ENCODE measurements at regions of chr5 and their contacts with region 1.

Region 1: DNA sequence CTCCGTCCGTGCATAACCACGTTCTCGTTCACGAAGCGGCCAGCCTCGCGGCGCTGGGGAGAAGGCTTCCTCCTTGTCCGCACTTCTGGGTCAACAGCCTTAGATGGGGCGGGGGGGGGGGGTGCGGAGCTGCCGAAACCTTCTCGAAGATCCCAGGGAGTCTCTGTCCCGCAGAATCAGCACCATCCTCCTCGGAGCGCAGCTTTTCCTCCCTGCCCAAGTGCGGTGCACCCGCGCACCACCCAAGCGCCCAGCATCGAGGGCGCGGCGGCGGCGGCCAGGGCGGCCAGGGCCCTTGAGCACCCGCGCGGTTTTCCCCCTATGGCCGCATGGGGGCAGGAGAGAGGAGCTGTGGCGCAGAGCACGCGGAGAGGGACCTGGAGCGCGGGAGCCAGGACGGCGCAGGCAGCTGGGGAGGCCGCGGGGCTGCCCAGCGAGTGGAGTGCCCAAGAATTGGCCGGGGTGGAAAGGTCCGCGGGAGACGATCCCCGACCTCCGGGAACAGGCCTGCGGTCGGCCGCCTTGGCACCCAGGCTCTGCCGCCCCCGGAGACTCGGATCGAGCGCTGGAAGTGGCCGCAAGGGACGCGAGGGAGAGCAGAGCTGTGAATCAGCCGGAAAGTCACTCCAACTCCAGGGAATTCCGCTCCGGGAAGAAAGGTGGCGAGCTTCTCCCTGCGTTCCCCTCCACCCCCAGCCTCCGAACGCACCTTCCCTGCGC is 43.1 kb downstream of the TMEM174 start:
- DNase-seq: no peak
- H3K4me3 ChIP-seq: peak overlapping the region; percentile 45
- H3K27me3 ChIP-seq: no peaks in the 10 kb centered on the region
- CTCF ChIP-seq: peak; percentile 65

Region 2: DNA sequence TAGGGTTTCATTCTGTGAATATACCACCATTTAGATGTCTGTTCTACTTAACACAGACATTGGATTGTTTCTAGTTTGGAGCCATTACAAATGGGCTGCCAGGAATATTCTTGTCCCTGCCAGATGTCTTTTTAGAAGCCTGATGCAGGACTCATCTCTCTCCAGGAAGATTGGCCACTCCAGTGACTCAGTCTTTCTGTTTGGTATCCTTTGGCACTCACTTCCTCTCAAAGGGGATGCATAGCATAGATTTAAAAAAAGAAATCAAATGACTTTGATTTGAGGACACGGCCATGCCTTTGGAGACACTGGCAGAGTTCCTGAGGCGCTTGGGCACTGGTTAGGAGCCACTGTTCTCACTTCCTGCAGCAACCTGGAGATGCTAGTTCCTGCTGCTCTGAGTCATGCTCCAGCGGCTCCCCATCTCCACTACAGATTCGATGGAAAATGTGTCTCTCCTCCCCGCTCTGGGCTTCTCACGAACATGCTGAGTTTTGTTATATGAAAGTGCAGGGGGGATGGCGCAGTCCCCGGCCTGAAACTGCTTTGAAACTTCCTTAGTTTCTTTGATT is 705.4 kb before region 1 on chr5:
- CTCF ChIA-PET with region 1: no interaction called
- POLR2A ChIA-PET with region 1: no interaction called
- DNase-seq: no peak
- H3K4me3 ChIP-seq: no peak overlapping the region
- H3K27me3 ChIP-seq: no peaks in the 10 kb centered on the region
- CTCF ChIP-seq: no peak

Region 3: DNA sequence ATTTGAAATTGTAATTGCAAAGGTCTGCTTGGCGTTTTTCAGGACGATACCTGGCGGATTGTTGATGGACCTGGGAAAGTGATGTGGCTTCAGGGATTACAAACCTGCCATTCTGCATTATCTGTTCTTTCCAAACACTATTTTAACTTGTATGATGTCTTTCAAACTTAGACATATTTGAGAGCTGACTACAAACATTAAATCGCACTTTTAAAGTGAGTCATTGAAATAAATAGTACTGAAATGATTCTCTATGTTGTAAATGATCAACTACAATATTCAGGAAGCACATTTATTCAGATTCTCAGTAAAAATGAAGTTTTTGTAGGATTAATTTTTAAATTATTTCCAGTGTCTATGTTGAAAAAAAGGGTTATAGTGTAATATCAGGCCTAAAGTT is 128.0 kb before region 1 on chr5:
- CTCF ChIA-PET with region 1: interaction called, 32 read pairs
- POLR2A ChIA-PET with region 1: no interaction called
- DNase-seq: no peak
- H3K4me3 ChIP-seq: no peak overlapping the region
- H3K27me3 ChIP-seq: no peaks in the 10 kb centered on the region
- CTCF ChIP-seq: no peak

Region 4: GRCh38 chr5:73170522-73170921 is 45.5 kb before region 1 on chr5:
- CTCF ChIA-PET with region 1: interaction called, 15 read pairs
- POLR2A ChIA-PET with region 1: no interaction called
- DNase-seq: no peak
- H3K4me3 ChIP-seq: no peak overlapping the region
- H3K27me3 ChIP-seq: peaks cover 9% of the 10 kb centered on the region
- CTCF ChIP-seq: peak; percentile 63

Region 5: DNA sequence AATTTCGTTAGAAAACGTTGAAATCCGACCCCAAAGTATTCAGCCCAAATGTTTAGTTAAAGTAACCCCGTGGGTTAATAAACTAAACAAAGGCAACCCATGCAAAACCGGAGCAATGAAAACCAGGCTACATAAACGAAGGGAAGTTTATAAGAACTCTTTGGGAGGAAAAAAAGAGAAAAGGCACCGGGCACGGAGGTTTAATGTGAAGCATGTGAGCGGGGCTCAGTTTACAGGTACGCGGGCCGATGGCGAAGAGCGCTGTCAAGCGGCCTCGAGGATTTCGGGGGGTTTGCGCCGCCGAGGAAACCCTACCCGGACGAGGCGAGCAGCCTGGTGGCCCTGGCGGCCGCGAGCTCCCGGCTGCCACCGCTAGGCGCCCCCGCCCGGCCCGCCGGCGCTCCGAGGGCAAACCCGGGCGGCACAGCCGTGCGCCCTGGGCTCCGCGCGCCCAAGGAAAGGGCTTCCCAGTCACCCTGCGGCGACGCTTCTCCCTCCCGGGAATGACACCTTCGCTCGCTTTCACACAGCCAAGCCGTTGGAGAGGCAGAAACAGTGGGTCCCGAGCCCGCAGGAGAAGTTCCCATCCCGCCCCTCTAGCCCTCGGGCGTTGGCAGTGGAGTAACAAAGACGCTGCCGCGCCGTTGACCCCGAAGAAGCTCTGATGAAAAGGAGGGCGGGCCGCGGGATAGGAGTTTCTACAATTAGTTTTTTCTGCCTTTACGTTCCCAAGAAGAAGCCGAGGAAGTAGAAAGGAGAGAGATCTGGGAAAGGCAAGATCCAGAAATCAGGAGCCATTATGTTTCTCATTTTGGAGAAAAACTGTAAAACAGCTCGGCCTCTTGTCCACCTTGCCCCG is 83.0 kb after region 1 on chr5:
- CTCF ChIA-PET with region 1: interaction called, 16 read pairs
- POLR2A ChIA-PET with region 1: no interaction called
- DNase-seq: no peak
- H3K4me3 ChIP-seq: peak overlapping the region; percentile 40
- H3K27me3 ChIP-seq: peaks cover 3% of the 10 kb centered on the region; the same call in 1 of the 2 replicates
- CTCF ChIP-seq: peak; percentile 10; the same call in 1 of the 2 replicates

Region 6: DNA sequence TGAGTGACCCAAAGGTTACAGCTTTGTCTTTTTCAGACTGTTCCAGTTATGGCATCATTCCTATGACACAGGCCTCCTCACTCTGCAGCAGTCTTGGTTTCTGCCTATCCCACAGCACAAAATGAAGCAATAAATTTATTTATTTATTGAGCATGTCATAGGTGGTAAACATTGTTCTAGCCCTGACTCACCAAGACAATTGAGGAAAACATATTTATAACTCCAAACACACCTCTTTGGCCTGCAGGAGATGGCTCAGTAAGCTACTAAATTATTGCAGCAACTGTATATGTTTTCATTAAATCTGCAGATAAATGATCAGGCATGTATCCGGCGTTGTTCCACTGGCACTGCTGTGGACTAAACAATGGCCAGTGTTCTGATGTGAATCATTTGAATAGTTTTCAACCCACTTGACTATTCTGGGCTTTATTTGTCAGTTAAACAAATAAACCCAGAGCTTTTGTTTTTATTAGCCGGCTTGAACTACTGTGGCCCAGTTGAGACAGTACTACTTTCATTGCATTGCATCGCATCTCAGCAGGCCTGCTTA is 149.3 kb after region 1 on chr5:
- CTCF ChIA-PET with region 1: interaction called, 19 read pairs
- POLR2A ChIA-PET with region 1: no interaction called
- DNase-seq: peak; percentile 76
- H3K4me3 ChIP-seq: no peak overlapping the region
- H3K27me3 ChIP-seq: no peaks in the 10 kb centered on the region
- CTCF ChIP-seq: no peak

Region 7: GRCh38 chr5:73448463-73449136 is 232.5 kb after region 1 on chr5 and contains the start of gene FOXD1:
- CTCF ChIA-PET with region 1: interaction called, 84 read pairs
- POLR2A ChIA-PET with region 1: no interaction called
- DNase-seq: peak; percentile 65
- H3K4me3 ChIP-seq: peak within 1 kb of the TSS; percentile 80
- H3K27me3 ChIP-seq: peaks cover 5% of the 10 kb centered on the region
- CTCF ChIP-seq: peak; percentile 11; the same call in 1 of the 2 replicates
- polyA plus RNA-seq, gene FOXD1: 4.3 and 4.9 TPM in 2 replicates

Region 8: DNA sequence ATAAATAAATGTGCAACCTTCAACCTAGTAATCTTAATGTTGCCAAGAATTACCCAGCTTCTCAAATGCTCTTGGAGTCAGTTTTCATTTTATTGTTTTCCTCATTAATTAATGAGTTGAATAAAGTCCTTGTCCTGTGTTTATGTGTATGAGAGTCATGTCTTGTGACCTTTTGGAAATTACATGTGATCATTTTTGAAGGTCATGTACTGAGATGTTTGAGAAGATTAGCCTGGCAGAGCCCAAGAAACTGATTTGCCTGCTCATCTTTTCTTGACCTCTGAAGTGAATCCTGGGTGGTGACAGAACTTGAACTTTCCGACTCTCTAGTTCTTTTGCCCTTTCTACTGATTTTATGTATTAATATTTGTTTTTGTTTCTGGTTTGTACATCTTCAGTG is 334.0 kb after region 1 on chr5:
- CTCF ChIA-PET with region 1: no interaction called
- POLR2A ChIA-PET with region 1: no interaction called
- DNase-seq: no peak
- H3K4me3 ChIP-seq: no peak overlapping the region
- H3K27me3 ChIP-seq: no peaks in the 10 kb centered on the region
- CTCF ChIP-seq: no peak

Region 9: DNA sequence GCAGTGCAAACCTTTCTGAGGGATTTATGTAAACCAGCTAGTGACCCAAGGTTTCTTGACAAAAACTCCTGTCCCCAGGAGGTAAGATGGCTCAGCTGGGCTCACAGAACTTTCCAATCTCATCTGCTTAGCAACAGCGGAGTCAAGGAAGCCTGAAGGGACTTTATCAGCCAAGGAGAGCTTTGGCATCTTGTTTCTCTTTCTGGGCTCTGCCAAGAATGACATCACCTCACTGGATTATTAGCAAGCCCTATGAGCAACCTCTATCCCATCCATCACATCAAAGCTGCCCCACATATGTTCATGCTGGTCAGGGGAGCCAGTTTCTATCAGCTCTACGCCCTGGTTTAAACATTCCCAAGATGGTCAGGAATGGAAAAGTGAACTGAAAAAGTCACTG is 963.1 kb after region 1 on chr5:
- CTCF ChIA-PET with region 1: no interaction called
- POLR2A ChIA-PET with region 1: no interaction called
- DNase-seq: no peak
- H3K4me3 ChIP-seq: no peak overlapping the region
- H3K27me3 ChIP-seq: no peaks in the 10 kb centered on the region
- CTCF ChIP-seq: no peak